GM10248 (cell line): ENCODE measurements at regions of chr4 and their contacts with region 1.

Region 1: GRCh38 chr4:99808260-99808857 is 8.3 kb upstream of the DAPP1 start:
- DNase-seq: peak; percentile 69
- CTCF ChIP-seq: peak; percentile 82

Region 2: DNA sequence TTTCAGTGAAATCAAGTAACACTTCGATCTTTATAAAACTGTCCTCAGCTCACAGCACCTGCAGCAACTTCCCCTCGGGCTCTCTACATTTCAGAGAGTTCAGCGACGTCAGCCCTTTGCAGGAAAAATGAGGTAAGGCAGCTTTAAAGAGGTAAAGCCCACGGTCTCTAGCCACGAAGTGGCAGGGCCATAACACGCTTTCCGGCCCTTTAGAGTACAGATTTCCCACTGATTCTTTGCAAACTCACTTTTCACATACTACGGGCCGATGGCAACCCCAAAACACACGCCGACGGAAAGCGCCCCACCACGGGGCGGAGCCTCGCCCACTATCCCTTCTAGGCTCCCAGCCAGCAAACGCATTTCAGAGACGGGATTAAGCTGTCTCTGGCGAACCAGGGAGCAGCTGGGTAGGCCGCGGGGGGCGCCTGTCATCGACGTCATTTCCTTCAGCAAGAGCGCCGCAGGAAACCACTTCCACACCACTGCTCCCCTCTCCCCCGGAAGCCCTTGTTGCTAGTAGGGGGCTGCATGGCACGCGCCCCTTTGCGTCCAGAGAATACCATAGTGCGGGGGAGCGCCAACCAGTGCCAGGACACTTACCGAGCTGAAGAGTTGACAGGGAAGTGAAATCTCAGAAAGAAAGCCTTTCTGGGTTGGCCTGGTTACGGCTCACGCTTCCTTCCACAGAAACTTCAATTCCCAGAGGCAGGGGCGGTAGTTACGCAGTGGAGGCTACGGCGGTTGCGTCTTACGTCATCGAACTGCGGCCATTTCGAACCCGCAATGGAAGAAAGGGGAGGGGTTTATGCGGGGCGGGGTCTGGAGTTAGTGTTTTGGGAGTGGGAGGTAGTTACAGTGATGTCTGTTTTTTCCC is 244.8 kb before region 1 on chr4 and contains the start of gene TRMT10A:
- CTCF ChIA-PET with region 1: interaction called, 30 read pairs
- POLR2A ChIA-PET with region 1: no interaction called
- DNase-seq: peak; percentile 91
- CTCF ChIP-seq: no peak

Region 3: DNA sequence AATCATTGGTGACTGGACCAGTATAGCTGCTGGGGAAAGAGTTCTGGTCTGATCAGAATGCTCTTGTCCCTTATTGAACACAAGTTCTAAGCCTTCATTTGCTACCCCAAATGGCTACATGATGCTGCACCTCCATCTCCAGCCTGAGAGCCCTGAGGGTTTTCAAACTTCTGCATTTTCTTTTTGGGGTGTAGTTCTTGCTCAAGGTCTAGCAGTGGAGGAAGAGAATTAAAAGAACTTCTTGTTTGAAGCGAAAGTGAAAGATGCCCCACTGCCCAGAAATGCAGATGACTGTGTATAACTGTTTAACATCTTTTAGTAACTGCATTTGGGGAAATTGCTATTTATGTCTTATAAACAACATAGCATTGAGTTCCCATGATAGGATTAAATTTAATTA is 47.3 kb after region 1 on chr4:
- CTCF ChIA-PET with region 1: interaction called, 17 read pairs
- POLR2A ChIA-PET with region 1: no interaction called
- DNase-seq: peak; percentile 29
- CTCF ChIP-seq: no peak

Region 4: DNA sequence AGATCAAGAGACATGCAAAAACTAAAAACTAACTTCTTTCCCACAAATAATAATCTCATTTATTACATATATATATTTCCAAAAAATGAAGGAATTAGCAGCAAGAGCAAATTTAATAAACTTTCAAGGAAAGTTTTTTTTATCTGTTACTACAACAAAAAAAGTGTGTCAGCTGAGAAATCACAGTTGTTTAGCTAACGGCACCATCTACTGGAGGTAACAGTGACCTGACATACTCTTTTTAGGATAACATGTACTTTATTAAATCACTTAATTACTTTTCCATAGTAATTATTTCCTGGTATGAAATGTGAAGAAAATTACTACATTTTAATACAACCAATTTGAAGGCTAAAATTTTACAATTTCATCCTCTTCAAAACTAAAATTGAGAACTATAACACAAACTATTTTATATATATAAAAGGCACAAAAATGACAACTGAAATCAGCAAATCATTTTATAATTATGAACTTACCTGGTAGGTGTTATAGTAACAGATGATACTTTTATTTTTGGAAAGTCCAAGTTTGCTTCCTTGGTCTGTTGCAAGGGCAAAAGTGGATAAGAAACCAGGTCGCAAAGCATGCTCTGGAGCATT is 76.8 kb after region 1 on chr4:
- CTCF ChIA-PET with region 1: interaction called, 37 read pairs
- POLR2A ChIA-PET with region 1: no interaction called
- DNase-seq: peak; percentile 14
- CTCF ChIP-seq: peak; percentile 50

Region 5: DNA sequence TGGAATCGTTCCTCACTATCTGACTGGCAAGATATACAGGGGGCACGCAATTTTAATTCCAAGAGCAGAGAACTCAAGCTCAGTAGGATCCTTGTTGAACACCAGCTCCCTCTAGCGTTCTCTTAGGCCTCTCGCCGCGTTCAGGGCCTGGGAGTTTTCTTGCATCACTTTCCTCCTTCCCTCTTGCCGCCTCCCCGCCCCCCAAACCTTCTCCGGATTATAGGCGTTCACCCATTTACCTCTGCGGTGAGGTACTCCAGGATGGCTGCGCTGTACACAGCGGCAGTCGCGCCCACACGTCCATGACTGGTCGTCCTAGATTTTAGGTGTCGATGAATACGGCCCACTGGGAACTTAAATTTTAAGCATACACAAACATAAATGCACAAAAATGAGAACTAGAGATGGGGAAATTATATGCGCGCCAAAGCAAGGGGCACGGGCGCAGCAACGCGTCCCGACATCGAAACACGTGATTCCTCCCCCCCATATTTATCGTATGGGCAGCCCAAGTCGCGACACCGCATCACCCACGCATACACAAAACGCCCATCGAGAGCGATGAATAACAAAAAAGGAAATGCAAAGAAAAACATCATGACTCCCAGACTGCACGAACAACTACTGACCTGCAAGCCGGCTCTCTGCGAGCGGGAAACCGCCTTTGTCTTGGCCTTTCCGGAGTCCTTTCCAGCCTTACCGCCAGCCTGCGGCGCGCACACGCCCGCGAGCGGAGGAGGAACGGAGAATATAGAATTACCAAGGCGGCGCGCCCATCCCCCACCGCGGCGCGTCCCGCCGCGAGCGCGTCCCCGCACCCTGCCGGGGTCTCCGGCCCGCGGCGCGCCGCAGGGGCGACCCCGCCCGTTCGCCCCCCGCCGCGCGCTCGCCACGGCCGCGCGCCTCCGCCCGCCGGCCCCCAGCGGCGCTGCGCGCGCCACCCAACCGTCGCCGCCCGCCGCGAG is 141.0 kb after region 1 on chr4:
- CTCF ChIA-PET with region 1: interaction called, 18 read pairs
- POLR2A ChIA-PET with region 1: interaction called, 3 read pairs
- DNase-seq: peak; percentile 74
- CTCF ChIP-seq: peak; percentile 80